AG04449 (cell line): ENCODE measurements at regions of chr22 and their contacts with region 1.

Region 1: DNA sequence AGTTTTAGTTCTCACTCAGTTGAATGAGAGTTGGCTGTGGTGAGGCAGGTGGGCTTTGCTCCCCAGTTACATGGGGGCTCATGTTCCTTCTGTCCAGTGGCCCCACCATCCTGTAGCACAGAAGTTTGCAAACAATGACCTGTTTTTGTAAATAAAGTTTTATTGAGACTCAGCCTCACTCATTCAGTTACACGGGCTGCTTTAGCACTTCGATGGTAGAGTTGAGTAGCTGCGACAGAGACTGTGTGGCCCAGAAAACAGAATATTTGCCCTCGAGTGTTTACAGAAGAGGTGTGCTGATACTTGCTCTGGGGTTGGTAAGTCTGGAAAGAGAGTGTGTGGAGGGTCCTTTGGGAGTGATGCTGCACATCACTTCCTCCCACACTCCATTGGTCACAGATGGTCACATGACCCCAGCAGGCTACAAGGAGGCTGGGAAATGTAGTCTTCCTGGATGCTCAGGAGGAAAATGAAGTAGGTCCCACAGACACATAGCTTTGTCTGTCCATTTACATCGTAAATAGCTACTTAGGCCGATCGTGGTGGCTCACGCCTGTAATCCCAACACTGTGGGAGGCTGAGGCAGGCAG is 34.6 kb downstream of the IFT27 start:
- DNase-seq: no peak
- H3K4me3 ChIP-seq: no peak overlapping the region
- CTCF ChIP-seq: no peak

Region 2: DNA sequence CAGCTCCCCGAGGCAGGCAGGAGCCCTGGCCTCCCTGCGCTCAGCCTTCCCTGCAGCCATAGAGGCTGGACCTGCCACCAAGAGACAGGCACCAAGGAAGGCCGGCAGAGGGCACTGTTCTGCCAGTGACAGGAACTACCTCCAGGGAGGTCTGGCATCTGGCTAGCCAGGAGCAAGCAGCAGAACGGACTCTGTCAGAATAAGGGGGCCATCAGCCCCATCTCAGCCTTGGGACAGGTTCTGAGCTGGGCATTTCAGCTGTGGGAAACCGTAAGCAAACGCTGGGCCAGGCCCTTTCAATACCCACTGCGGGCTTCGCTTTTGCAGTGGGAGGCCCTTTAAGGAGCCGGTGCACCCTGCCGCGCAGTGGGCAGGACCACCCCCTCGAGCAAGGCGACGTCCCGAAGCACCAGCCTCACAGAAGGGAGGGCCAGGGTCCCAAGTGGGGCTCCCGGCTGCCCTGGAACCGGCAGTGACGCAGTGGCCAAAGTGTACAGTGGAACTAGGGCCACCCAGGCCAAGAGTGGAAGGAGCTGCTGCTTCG is 16.4 kb after region 1 on chr22:
- CTCF ChIA-PET with region 1: interaction called, 47 read pairs
- POLR2A ChIA-PET with region 1: no interaction called
- DNase-seq: no peak
- H3K4me3 ChIP-seq: no peak overlapping the region
- CTCF ChIP-seq: peak; percentile 92